GM12878 (cell line): ENCODE measurements at regions of chr11 and their contacts with region 1.

Region 1: DNA sequence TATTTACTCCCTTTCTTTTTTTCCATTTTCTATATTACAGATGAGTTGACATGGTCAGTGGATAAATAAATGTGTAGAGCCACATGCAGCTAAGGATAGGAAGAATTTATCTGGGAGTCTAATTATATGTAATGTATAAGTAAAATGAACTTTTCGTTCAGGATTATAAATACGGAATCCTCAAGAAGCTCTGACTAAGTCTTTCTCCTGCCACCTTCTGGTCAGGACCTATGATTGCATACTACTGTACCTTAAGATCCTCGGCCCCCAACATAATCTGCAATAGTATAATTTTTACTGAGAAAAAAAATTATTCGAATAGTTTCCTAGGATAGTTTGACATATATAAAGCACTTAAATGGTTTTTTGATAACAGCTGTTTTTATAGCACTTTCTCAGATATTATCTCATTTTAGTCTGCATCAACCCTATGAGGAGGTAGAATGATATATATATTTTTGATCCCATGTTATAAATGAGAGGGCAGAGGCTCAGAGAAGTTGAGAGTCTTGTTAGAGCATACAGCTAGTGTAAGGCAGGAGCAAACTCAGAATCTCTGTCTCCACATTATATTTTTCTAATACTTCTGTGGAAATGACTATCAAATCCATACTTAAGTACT is 36.1 kb downstream of the CCDC90B start:
- DNase-seq: no peak
- ATAC-seq: peak; percentile 93
- H3K4me3 ChIP-seq: no peak overlapping the region
- H3K27ac ChIP-seq: no peak overlapping the region
- H3K4me1 ChIP-seq: peaks cover 12% of the 10 kb centered on the region
- H3K27me3 ChIP-seq: no peaks in the 10 kb centered on the region
- CTCF ChIP-seq: peak; percentile 51 to 68 (median 66)
- EP300 ChIP-seq: no peak
- POLR2A ChIP-seq: no peak
- RAD21 ChIP-seq: peak; percentile 75

Region 2: DNA sequence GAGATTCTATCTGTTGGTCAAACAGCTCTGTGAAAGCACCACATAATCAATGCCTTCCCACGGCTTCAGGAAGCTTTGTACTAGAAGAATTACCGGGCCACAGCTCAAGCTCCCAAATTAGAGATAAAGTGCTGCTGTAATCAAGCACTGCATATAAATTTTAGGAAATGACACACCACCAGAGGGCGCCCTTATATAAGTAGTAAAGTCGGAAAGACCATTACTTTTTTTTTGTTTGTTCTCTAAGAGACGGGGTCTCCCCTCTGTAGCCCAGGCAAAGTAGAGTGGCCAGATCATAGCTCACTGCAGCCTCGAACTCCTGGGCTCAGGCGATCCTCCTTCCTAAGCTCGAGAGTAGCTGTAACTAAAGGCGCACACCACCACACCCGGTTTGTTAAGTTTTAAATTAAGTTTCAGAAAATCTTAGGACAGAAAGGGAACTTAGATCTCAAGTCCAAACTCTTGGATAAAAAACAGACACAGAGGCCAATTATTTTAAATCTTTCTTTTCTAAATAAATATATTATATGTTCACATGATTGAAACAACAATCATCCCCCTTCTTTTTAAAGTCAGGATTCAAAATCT is 382.5 kb before region 1 on chr11:
- CTCF ChIA-PET with region 1: interaction called, 79 read pairs
- POLR2A ChIA-PET with region 1: interaction called, 3 read pairs
- RAD21 ChIA-PET with region 1: interaction called, 36 read pairs
- SMC1A ChIA-PET with region 1: interaction called, 46 read pairs
- in situ Hi-C with region 1: no loop called
- intact Hi-C with region 1: loop called (anchors 1 kb)
- DNase-seq: peak; percentile 26
- ATAC-seq: peak; percentile 74
- H3K4me3 ChIP-seq: no peak overlapping the region
- H3K27ac ChIP-seq: no peak overlapping the region
- H3K4me1 ChIP-seq: peaks cover 7% of the 10 kb centered on the region
- H3K27me3 ChIP-seq: no peaks in the 10 kb centered on the region
- CTCF ChIP-seq: peak; percentile 53 to 75 (median 64); a peak in 5 of 6 replicates
- EP300 ChIP-seq: no peak
- POLR2A ChIP-seq: no peak
- RAD21 ChIP-seq: peak; percentile 81

Region 3: DNA sequence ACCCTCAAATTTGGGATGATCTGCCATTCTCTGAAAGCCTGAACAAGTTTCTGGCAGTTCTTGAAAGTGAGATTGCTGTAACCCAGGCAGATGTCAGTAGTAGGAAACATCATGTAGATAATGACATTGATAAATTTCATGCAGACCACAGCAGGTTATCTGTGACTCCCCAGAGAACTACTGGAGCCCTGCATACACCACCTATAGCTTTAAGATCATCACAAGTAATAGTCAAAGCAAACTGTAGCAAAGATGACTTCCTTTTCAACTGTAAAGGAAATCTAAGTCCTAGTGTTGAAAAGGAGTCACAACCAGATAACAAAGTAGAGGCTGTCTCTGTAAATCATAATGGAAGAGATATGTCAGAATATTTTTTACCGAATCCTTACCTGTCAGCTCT is 317.5 kb before region 1 on chr11:
- CTCF ChIA-PET with region 1: interaction called, 13 read pairs
- POLR2A ChIA-PET with region 1: interaction called, 3 read pairs
- RAD21 ChIA-PET with region 1: interaction called, 7 read pairs
- SMC1A ChIA-PET with region 1: interaction called, 5 read pairs
- in situ Hi-C with region 1: no loop called
- intact Hi-C with region 1: no loop called
- DNase-seq: no peak
- ATAC-seq: no peak
- H3K4me3 ChIP-seq: no peak overlapping the region
- H3K27ac ChIP-seq: no peak overlapping the region
- H3K4me1 ChIP-seq: peaks cover 13% of the 10 kb centered on the region
- H3K27me3 ChIP-seq: no peaks in the 10 kb centered on the region
- CTCF ChIP-seq: no peak
- EP300 ChIP-seq: no peak
- POLR2A ChIP-seq: no peak
- RAD21 ChIP-seq: no peak

Region 4: GRCh38 chr11:83092488-83093384 is 157.3 kb before region 1 on chr11:
- CTCF ChIA-PET with region 1: interaction called, 42 read pairs
- POLR2A ChIA-PET with region 1: no interaction called
- RAD21 ChIA-PET with region 1: interaction called, 9 read pairs
- SMC1A ChIA-PET with region 1: interaction called, 24 read pairs
- in situ Hi-C with region 1: no loop called
- intact Hi-C with region 1: loop called (anchors 5 kb)
- DNase-seq: no peak
- ATAC-seq: no peak
- H3K4me3 ChIP-seq: no peak overlapping the region
- H3K27ac ChIP-seq: no peak overlapping the region
- H3K4me1 ChIP-seq: no peaks in the 10 kb centered on the region
- H3K27me3 ChIP-seq: no peaks in the 10 kb centered on the region
- CTCF ChIP-seq: no peak
- EP300 ChIP-seq: no peak
- POLR2A ChIP-seq: no peak
- RAD21 ChIP-seq: no peak

Region 5: GRCh38 chr11:83272627-83273026 is 22.5 kb after region 1 on chr11:
- CTCF ChIA-PET with region 1: interaction called, 14 read pairs
- POLR2A ChIA-PET with region 1: no interaction called
- RAD21 ChIA-PET with region 1: interaction called, 4 read pairs
- SMC1A ChIA-PET with region 1: interaction called, 4 read pairs
- in situ Hi-C with region 1: no loop called
- intact Hi-C with region 1: loop called (anchors 2 kb)
- DNase-seq: no peak
- ATAC-seq: no peak
- H3K4me3 ChIP-seq: no peak overlapping the region
- H3K27ac ChIP-seq: no peak overlapping the region
- H3K4me1 ChIP-seq: no peaks in the 10 kb centered on the region
- H3K27me3 ChIP-seq: no peaks in the 10 kb centered on the region
- CTCF ChIP-seq: no peak
- EP300 ChIP-seq: no peak
- POLR2A ChIP-seq: no peak
- RAD21 ChIP-seq: no peak

Region 6: GRCh38 chr11:83317757-83318690 is 67.9 kb after region 1 on chr11:
- CTCF ChIA-PET with region 1: no interaction called
- POLR2A ChIA-PET with region 1: no interaction called
- RAD21 ChIA-PET with region 1: no interaction called
- SMC1A ChIA-PET with region 1: no interaction called
- in situ Hi-C with region 1: no loop called
- intact Hi-C with region 1: no loop called
- DNase-seq: no peak
- ATAC-seq: no peak
- H3K4me3 ChIP-seq: no peak overlapping the region
- H3K27ac ChIP-seq: no peak overlapping the region
- H3K4me1 ChIP-seq: no peaks in the 10 kb centered on the region
- H3K27me3 ChIP-seq: no peaks in the 10 kb centered on the region
- CTCF ChIP-seq: no peak
- EP300 ChIP-seq: no peak
- POLR2A ChIP-seq: no peak
- RAD21 ChIP-seq: no peak